ENCODE measurements at regions of chr4 and their contacts with region 1.

Region 1: DNA sequence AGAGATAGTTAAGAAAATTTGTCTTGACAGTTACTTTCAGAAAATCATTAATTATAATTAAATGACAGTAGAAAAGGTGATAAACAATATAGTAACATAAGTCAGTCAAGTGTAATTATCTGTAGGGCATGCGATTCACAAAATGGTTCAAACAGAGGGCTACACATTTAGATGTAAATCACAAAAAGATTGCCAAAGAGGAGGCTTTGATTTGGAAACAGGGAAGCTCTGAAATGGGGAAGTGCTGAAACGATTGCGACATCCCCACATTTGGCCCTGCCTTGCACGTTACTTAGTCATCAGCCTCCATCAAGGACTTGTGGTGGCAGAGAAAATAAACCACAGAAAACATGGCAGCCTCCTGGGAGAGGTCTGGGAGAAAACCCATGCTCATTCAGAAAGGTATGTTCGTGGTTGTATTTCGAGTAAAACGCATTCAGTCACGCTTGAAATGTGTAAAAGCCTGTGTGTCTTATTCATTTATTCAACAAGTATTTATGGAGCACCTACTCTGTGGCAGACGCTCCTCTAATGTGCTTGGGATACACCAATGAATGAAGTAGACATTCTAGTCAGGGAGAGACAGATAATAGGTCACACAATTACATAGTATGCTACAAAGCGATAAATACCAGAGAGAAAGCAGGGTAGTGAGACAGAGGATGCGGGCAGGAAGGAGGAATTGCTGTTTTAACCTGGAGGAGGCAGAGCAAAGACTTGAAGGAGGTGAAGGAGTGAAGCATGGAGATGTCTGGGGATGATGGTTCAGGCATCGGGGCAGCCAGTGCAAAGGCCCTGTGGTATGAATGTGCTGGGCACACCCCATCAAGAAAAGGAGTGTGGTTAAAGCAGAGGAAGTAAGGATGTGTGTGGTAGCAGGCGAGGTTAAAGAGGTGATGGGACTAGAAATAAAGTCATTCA is 7.8 kb downstream of the RBM47 start:
- DNase-seq: peak; percentile 69
- H3K4me3 Mint-ChIP-seq: peak overlapping the region; percentile 65
- H3K27ac Mint-ChIP-seq: peak overlapping the region; percentile 99
- H3K4me1 Mint-ChIP-seq: peaks cover 46% of the 10 kb centered on the region
- H3K27me3 Mint-ChIP-seq: no peaks in the 10 kb centered on the region
- CTCF ChIP-seq: no peak

Region 2: DNA sequence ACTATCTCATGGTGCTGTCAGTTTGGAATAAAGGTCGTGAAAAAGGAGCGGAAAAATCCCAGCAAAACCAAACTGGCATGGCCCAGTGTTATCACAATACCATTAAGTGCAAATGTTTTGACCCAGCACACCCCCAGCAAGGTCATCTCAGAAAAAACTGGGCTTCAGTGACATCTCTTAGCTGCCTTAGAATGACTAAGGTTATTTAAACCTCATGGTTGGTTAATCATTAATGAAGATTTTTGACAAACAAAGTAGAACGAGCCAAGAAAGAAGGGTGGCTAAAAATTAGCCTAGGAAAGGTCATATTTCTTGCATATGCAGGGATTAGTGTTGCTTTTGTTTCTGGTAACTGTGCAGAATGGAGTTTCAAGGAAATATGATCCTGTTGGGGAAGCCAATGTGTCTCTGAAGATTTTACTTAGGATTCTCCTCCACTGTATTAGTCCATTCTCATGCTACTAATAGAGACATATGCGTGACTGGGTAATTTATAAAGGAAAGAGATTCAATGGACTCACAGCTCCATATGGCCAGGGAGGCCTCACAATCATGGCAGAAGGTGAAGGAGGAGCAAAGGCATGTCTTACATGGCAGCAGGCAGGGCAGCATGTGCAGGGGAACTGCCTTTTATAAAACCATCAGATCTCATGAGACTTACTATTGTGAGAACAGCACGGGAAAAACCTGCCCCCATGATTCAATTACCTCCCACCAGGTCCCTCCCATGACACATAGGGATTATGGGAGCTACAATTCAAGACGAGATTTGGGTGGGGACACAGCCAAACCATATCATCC is 203.2 kb before region 1 on chr4:
- CTCF ChIA-PET with region 1: no interaction called
- intact Hi-C with region 1: no loop called
- DNase-seq: no peak
- H3K4me3 Mint-ChIP-seq: no peak overlapping the region
- H3K27ac Mint-ChIP-seq: peak overlapping the region; percentile 53
- H3K4me1 Mint-ChIP-seq: peaks cover 33% of the 10 kb centered on the region
- H3K27me3 Mint-ChIP-seq: no peaks in the 10 kb centered on the region
- CTCF ChIP-seq: no peak

Region 3: DNA sequence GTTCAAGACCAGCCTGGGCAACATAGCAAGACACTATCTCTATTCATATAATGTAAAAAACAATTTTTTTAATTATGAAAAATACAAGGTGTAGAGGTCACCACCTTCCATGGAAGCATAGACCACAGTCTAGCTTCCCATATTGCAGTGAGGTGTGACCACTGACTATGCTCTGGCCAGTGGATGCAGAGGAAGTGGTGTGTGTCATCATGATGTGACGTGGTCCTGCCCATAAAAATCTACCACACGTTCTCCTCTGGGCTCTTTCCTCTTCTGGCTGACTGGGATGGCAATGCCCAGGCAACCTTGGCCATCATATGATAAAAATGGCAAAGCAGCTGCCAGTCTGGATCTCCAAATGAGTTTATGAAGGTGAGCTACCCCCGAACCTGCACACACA is 57.8 kb before region 1 on chr4:
- CTCF ChIA-PET with region 1: interaction called, 3 read pairs
- intact Hi-C with region 1: loop called (anchors 5 kb)
- DNase-seq: no peak
- H3K4me3 Mint-ChIP-seq: no peak overlapping the region
- H3K27ac Mint-ChIP-seq: no peak overlapping the region
- H3K4me1 Mint-ChIP-seq: peaks cover 53% of the 10 kb centered on the region
- H3K27me3 Mint-ChIP-seq: no peaks in the 10 kb centered on the region
- CTCF ChIP-seq: no peak

Region 4: DNA sequence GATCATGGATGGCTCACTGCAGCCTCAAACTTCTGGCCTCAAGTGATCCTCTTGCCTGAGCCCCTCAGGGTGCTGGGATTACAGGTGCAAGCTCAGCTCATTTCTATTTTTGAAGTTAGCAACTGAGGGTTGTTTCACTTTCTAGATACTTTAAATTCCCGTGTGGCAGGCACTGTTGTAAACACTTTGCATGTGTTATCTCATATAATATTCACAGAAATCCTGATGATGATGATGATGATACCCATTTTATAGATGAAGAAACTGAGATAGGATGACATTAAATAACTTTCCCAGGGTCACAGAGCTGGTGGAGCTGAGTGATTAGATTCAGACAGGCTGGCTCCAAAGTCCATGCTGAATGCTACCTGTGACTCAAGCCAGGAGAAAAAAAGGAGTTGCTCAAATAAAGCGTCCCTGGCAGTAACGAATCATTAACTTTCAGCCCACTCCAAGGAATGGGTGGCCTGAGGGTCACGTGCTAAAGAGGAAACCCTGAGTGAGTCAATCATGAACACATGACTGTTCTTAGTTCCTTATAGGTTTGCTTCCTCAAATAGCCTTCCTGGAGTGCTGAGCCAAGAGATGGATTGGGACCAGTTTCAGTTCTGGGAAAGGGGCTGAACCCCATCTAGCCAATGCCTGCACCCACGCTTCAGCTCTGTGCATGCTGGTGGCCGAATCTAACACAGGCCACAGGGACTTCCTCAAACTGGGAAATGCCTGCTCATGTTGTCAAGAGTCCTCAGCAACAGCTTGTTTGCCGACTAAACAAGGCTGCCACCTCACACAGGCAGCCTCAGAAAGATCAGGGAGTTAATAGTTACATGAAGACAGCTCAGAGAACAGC is 45.0 kb before region 1 on chr4:
- CTCF ChIA-PET with region 1: interaction called, 3 read pairs
- intact Hi-C with region 1: loop called (anchors 2 kb)
- DNase-seq: peak; percentile 79
- H3K4me3 Mint-ChIP-seq: peak overlapping the region; percentile 58
- H3K27ac Mint-ChIP-seq: peak overlapping the region; percentile 92
- H3K4me1 Mint-ChIP-seq: peaks cover 46% of the 10 kb centered on the region
- H3K27me3 Mint-ChIP-seq: no peaks in the 10 kb centered on the region
- CTCF ChIP-seq: no peak

Region 5: DNA sequence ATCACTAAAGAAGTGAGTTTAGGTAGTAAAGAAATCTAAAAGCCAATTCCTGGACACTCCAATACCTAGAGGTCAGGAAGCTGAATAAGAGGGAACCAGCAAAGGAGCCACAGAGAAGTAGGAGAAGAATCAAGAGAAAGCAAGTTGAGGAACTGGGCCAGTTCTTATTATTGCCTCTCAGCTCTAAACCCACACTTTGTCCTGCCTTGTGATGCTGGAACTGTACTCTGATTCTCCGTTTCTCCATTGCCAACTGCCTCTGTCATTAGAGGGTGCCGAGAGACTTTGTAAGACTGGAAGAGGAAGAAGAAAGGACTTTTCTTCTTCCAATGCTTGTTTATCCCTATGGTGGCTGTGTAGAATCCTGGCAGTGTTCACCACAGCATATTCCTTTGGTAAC is 166.5 kb after region 1 on chr4:
- CTCF ChIA-PET with region 1: no interaction called
- intact Hi-C with region 1: no loop called
- DNase-seq: no peak
- H3K4me3 Mint-ChIP-seq: no peak overlapping the region
- H3K27ac Mint-ChIP-seq: no peak overlapping the region
- H3K4me1 Mint-ChIP-seq: no peaks in the 10 kb centered on the region
- H3K27me3 Mint-ChIP-seq: no peaks in the 10 kb centered on the region
- CTCF ChIP-seq: no peak

Measured in Calu3 (cell line).